IMR-90 (cell line): ENCODE measurements at regions of chr2 and their contacts with region 1.

Region 1: GRCh38 chr2:171598713-171599319 is 76.5 kb downstream of the CYBRD1 start:
- DNase-seq: peak; percentile 77
- ATAC-seq: peak; percentile 95
- H3K4me3 ChIP-seq: no peak overlapping the region
- H3K27ac ChIP-seq: no peak overlapping the region
- H3K4me1 ChIP-seq: peaks cover 3% of the 10 kb centered on the region; the same call in 1 of the 2 replicates
- H3K27me3 ChIP-seq: peaks cover 18% of the 10 kb centered on the region
- CTCF ChIP-seq: peak; percentile 77
- POLR2A ChIP-seq: no peak
- RAD21 ChIP-seq: peak; percentile 72

Region 2: GRCh38 chr2:172131713-172132555 is 533.1 kb after region 1 on chr2:
- CTCF ChIA-PET with region 1: no interaction called
- POLR2A ChIA-PET with region 1: no interaction called
- dilution Hi-C with region 1: no loop called
- in situ Hi-C with region 1: loop called (anchors 10 kb)
- intact Hi-C with region 1: loop called (anchors 5 kb)
- DNase-seq: no peak
- ATAC-seq: no peak
- H3K4me3 ChIP-seq: no peak overlapping the region
- H3K27ac ChIP-seq: no peak overlapping the region
- H3K4me1 ChIP-seq: peaks cover 2% of the 10 kb centered on the region; the same call in 1 of the 2 replicates
- H3K27me3 ChIP-seq: peaks cover 7% of the 10 kb centered on the region
- CTCF ChIP-seq: no peak
- POLR2A ChIP-seq: no peak
- RAD21 ChIP-seq: no peak